ENCODE measurements at regions of chr4 and their contacts with region 1.

Region 1: DNA sequence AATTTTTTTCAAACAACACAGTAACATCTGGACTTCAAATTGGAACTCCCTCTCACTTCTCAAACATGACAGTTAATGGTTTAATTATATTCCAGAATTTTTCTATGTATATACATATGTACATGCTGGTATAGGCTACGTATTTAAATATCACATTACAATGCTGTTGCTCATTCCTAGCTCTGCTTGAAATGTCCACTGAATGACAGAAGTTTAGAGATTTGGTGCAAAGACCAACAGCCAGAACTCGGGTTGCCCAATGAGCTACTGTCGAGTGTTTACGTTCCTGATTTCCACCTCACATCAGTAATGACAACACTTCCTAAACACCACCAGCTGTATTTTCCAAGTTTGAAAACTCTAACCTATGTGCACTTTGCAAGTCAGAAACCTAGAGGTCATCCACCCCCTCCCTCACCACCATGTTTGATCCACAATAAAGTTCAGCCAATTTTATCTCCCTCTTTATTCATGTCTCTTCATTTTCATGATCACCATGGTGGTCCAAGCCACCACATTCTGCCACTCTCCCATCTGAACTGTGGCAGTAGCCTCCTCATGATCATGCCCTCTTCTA is 49.3 kb upstream of the RPL34 start:
- DNase-seq: no peak
- H3K4me3 ChIP-seq: no peak overlapping the region
- H3K27ac ChIP-seq: no peak overlapping the region
- H3K4me1 ChIP-seq: peaks cover 0 to 4% (median 0%) of the 10 kb centered on the region in 4 experiments; a peak in 1 of 7 replicates
- H3K27me3 ChIP-seq: peaks cover 0 to 1% (median 0%) of the 10 kb centered on the region in 4 experiments; a peak in 1 of 7 replicates
- CTCF ChIP-seq: no peak
- EP300 ChIP-seq: no peak
- POLR2A ChIP-seq: no peak
- RAD21 ChIP-seq: no peak

Region 2: GRCh38 chr4:108030332-108030731 is 540.7 kb before region 1 on chr4:
- CTCF ChIA-PET with region 1: interaction called, 18 read pairs
- POLR2A ChIA-PET with region 1: no interaction called
- DNase-seq: peak in 1 of 2 experiments; percentile 25
- H3K4me3 ChIP-seq: no peak overlapping the region
- H3K27ac ChIP-seq: no peak overlapping the region
- H3K4me1 ChIP-seq: no peaks in the 10 kb centered on the region
- H3K27me3 ChIP-seq: no peaks in the 10 kb centered on the region
- CTCF ChIP-seq: peak; percentile 39 to 77 (median 66)
- EP300 ChIP-seq: 0 out of 3 replicates have a peak, but pooled peaks of 1 of the 2 experiments have one; percentile 5
- POLR2A ChIP-seq: no peak
- RAD21 ChIP-seq: peak; percentile 84 to 88

Region 3: GRCh38 chr4:108060164-108060563 is 510.9 kb before region 1 on chr4:
- CTCF ChIA-PET with region 1: interaction called, 15 read pairs
- POLR2A ChIA-PET with region 1: no interaction called
- DNase-seq: no peak
- H3K4me3 ChIP-seq: no peak overlapping the region
- H3K27ac ChIP-seq: no peak overlapping the region
- H3K4me1 ChIP-seq: no peaks in the 10 kb centered on the region; a peak in 1 of 7 replicates
- H3K27me3 ChIP-seq: no peaks in the 10 kb centered on the region; a peak in 1 of 7 replicates
- CTCF ChIP-seq: peak in 2 of 3 experiments; percentile 45 to 47; a peak in 3 of 4 replicates
- EP300 ChIP-seq: no peak
- POLR2A ChIP-seq: no peak
- RAD21 ChIP-seq: peak; percentile 79 to 86

Region 4: GRCh38 chr4:108492816-108493595 is 78.1 kb before region 1 on chr4:
- CTCF ChIA-PET with region 1: interaction called, 13 read pairs
- POLR2A ChIA-PET with region 1: no interaction called
- DNase-seq: peak; percentile 21 to 79
- H3K4me3 ChIP-seq: no peak overlapping the region
- H3K27ac ChIP-seq: no peak overlapping the region
- H3K4me1 ChIP-seq: no peaks in the 10 kb centered on the region; a peak in 1 of 7 replicates
- H3K27me3 ChIP-seq: no peaks in the 10 kb centered on the region
- CTCF ChIP-seq: peak; percentile 87 to 97 (median 92)
- EP300 ChIP-seq: no peak
- POLR2A ChIP-seq: no peak
- RAD21 ChIP-seq: peak; percentile 99

Region 5: GRCh38 chr4:108546728-108547127 is 24.4 kb before region 1 on chr4:
- CTCF ChIA-PET with region 1: interaction called, 10 read pairs
- POLR2A ChIA-PET with region 1: no interaction called
- DNase-seq: no peak
- H3K4me3 ChIP-seq: no peak overlapping the region
- H3K27ac ChIP-seq: no peak overlapping the region
- H3K4me1 ChIP-seq: no peaks in the 10 kb centered on the region
- H3K27me3 ChIP-seq: no peaks in the 10 kb centered on the region
- CTCF ChIP-seq: no peak
- EP300 ChIP-seq: no peak
- POLR2A ChIP-seq: no peak
- RAD21 ChIP-seq: no peak

Region 6: GRCh38 chr4:108581083-108581482 is 10.0 kb after region 1 on chr4:
- CTCF ChIA-PET with region 1: interaction called, 19 read pairs
- POLR2A ChIA-PET with region 1: no interaction called
- DNase-seq: no peak
- H3K4me3 ChIP-seq: no peak overlapping the region
- H3K27ac ChIP-seq: no peak overlapping the region
- H3K4me1 ChIP-seq: no peaks in the 10 kb centered on the region
- H3K27me3 ChIP-seq: no peaks in the 10 kb centered on the region
- CTCF ChIP-seq: no peak
- EP300 ChIP-seq: no peak
- POLR2A ChIP-seq: no peak
- RAD21 ChIP-seq: no peak

Region 7: GRCh38 chr4:108596344-108596743 is 25.3 kb after region 1 on chr4:
- CTCF ChIA-PET with region 1: interaction called, 10 read pairs
- POLR2A ChIA-PET with region 1: interaction called, 3 read pairs
- DNase-seq: no peak
- H3K4me3 ChIP-seq: no peak overlapping the region
- H3K27ac ChIP-seq: no peak overlapping the region
- H3K4me1 ChIP-seq: no peaks in the 10 kb centered on the region; a peak in 1 of 7 replicates
- H3K27me3 ChIP-seq: peaks cover 0 to 2% (median 1%) of the 10 kb centered on the region in 4 experiments; a peak in 4 of 7 replicates
- CTCF ChIP-seq: no peak
- EP300 ChIP-seq: no peak
- POLR2A ChIP-seq: no peak
- RAD21 ChIP-seq: no peak

Region 8: DNA sequence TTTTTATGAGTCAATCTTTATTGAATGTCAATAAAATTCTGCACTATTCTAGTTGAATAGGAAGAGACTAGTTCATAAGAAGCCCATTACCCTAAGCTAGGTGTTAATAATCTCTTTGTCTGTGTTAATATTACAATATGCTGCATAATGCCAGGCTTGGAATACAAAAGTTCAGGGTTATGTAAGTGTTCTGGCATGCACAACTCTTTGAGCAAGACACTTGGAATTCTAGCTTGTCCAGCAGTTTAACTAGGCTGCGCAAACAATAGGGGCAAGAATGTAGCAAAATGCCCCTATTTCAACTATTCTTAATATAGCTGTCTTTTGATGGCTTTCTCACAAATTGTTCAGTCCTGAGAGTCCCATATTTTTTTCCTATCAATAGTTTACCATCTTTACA is 223.1 kb after region 1 on chr4:
- CTCF ChIA-PET with region 1: no interaction called
- POLR2A ChIA-PET with region 1: no interaction called
- DNase-seq: no peak
- H3K4me3 ChIP-seq: no peak overlapping the region
- H3K27ac ChIP-seq: no peak overlapping the region
- H3K4me1 ChIP-seq: no peaks in the 10 kb centered on the region
- H3K27me3 ChIP-seq: no peaks in the 10 kb centered on the region
- CTCF ChIP-seq: no peak
- EP300 ChIP-seq: no peak
- POLR2A ChIP-seq: no peak
- RAD21 ChIP-seq: no peak

Region 9: DNA sequence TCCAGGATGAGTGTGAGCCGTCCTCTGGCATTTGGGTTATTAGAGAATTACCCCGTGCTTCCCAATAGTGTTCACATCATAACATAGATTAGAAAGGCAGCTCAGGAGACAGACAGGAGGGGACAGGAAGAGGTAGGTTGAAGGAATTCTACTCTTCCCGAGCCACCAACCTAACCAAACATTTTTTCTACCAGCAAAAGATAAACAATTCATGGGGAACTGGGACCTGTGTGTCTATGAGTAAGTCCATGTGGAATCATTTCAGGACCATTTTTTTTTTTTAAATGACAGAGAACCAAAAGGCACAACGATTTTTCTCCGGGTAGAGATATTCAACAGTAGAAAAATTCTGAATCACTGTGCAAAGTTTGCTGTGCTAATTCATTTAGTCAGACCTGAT is 366.0 kb after region 1 on chr4:
- CTCF ChIA-PET with region 1: no interaction called
- POLR2A ChIA-PET with region 1: no interaction called
- DNase-seq: no peak
- H3K4me3 ChIP-seq: no peak overlapping the region
- H3K27ac ChIP-seq: no peak overlapping the region
- H3K4me1 ChIP-seq: peaks cover 0 to 5% (median 1%) of the 10 kb centered on the region in 4 experiments; a peak in 3 of 7 replicates
- H3K27me3 ChIP-seq: no peaks in the 10 kb centered on the region
- CTCF ChIP-seq: no peak
- EP300 ChIP-seq: no peak
- POLR2A ChIP-seq: no peak
- RAD21 ChIP-seq: no peak